ENCODE measurements at regions of chr9 and their contacts with region 1.

Region 1: DNA sequence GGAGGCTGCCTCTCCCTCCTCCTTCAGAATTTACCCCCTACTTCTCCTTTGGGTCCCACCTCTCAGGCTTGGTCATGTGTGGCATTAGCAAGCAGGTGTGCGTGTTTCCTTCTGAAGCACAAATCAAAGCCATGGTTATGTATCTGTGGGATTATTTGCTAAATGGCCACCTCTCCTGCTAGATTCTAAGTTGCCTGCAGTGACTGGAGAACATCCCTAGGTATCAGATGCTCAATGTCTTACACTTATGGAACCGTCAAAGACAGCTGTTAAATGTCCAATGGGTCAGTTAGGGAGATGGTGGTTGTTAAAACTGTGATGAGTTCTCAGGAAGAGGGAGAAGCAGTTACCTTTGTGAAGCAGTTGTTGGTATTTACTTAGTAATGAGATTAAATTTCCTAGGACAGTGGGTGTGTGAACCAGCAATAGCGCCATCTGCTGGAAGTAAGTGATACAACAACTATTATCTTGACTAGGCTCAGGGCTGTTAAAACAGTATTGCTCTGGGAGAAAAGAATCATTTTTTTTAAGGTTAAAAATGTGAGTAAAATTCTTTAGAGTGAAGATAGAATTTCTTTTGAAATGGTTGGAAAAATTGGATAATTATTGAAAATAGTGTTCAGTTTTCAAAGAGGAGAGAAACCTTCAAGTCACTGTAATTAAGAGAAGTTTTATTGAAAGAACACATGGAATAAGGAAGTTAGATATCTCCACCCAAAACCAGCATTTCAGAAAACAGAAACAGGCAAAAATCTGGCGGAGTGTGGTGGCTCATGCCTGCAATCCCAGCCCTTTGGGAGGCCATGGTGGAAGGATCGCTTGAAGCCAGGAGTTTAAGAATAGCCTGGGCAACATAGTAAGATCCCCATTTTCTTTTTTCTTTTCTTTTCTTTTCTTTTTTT is 71.3 kb downstream of the TMC1 start:
- DNase-seq: no peak
- H3K4me3 ChIP-seq: no peak overlapping the region
- H3K27me3 ChIP-seq: no peaks in the 10 kb centered on the region
- CTCF ChIP-seq: peak; percentile 68

Region 2: GRCh38 chr9:72292256-72292682 is 300.5 kb before region 1 on chr9:
- CTCF ChIA-PET with region 1: interaction called, 13 read pairs
- POLR2A ChIA-PET with region 1: no interaction called
- DNase-seq: no peak
- H3K4me3 ChIP-seq: no peak overlapping the region
- H3K27me3 ChIP-seq: peaks cover 3% of the 10 kb centered on the region; the same call in 1 of the 2 replicates
- CTCF ChIP-seq: peak; percentile 50